Activated CD8-positive, alpha-beta memory T cell treated with anti-CD3 and anti-CD28 coated beads, Interleukin-2, amount 10 ng/mL, durations not matched to agents 7 days and 5 days (primary cell): ENCODE measurements at regions of chr3 and their contacts with region 1.

Region 1: DNA sequence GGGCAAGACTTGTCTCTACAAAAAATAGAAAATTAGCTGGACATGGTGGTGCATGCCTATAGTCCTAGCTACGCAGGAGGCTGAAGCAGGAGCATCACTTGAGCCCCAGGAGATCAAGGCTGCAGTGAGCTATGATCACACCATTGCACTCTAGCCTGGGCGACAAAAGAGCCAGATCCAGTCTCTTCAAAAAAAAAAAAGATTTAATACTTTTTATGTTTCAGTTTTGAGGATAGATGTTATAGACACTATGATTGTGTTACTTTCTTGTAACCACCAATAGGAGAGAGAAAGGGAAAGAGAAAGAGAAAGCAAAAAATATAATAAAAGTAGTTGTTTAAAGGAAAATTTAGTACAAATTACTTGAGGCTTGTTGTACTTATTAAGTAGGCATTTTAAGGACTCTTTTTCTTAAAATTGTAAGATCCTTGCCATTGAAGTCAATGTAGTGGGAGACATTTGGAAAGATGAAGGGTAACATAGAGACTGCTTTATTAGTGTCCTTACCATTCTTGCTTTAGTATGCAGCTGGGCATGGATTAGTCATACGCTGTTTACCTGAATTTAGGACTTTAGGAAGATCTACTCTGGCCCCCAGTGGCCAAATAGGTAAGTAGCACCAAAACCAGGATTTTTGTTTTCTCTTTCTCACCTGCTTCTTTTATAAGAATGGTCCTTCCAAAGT is 35.1 kb upstream of the ZDHHC23 start:
- DNase-seq: peak; percentile 53
- ATAC-seq: peak; percentile 96
- H3K4me3 Mint-ChIP-seq: peak overlapping the region; percentile 54
- H3K27ac Mint-ChIP-seq: peak overlapping the region; percentile 52
- H3K4me1 Mint-ChIP-seq: peaks cover 8% of the 10 kb centered on the region
- H3K27me3 Mint-ChIP-seq: peaks cover 3% of the 10 kb centered on the region

Region 2: DNA sequence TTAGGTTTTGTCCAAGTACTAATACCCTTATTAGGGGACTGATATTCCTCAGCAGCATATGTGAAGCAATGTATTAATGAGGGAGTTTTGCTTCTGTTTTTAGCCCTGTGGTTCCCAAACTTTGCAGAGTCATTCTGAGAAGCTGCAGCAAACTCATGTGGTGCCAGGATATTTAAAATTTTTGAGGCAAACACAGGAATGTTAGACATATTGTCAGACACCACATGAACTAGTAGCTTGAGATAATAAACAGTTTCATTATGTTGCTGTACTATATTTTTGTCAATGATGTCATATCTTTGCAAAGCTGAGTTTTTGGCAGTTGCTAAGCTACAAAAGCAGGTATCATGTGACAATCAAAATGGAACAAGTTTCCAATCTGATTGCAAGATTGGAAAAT is 129.2 kb before region 1 on chr3:
- CTCF ChIA-PET with region 1: no interaction called
- DNase-seq: no peak
- ATAC-seq: no peak
- H3K4me3 Mint-ChIP-seq: no peak overlapping the region
- H3K27ac Mint-ChIP-seq: no peak overlapping the region
- H3K4me1 Mint-ChIP-seq: peaks cover 12% of the 10 kb centered on the region
- H3K27me3 Mint-ChIP-seq: no peaks in the 10 kb centered on the region

Region 3: DNA sequence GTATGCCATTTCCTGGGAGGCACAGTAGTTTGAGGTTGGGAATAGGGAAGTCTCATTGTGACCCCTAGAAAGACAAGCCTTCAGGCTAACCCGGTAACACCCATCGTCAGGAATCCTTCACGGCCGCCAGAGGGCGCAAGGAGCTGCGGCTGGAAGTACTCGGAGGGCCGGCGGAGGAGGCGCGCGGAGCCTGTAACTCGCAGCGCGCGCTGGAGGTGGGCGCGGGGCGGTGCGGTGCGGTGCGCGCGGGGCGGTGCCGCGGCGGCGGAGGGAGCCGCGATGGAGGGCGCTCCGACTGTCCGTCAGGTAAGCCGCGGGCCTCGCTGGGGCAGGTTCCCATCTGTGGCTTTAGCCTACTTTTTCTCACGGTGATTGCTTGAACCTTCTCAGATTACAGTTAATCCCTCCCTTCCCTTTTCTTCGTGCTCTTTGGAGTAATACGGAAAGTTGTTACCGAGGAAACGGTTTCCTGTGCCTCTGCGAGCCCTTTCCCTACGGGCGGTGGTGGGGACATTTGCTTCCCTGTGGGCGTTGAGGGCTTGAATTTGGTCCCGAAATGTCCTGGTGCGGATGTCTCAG is 74.0 kb before region 1 on chr3 and contains the start of gene GRAMD1C:
- CTCF ChIA-PET with region 1: interaction called, 28 read pairs
- DNase-seq: peak; percentile 88
- ATAC-seq: peak; percentile 99
- H3K4me3 Mint-ChIP-seq: peak within 1 kb of the TSS; percentile 69
- H3K27ac Mint-ChIP-seq: no peak within 1 kb of the TSS
- H3K4me1 Mint-ChIP-seq: peaks cover 8% of the 10 kb centered on the region
- H3K27me3 Mint-ChIP-seq: no peaks in the 10 kb centered on the region
- total RNA-seq, gene GRAMD1C: 0.40 to 1.1 TPM

Region 4: GRCh38 chr3:113844622-113845222 is 68.0 kb before region 1 on chr3:
- CTCF ChIA-PET with region 1: interaction called, 28 read pairs
- DNase-seq: no peak
- ATAC-seq: peak; percentile 60
- H3K4me3 Mint-ChIP-seq: no peak overlapping the region
- H3K27ac Mint-ChIP-seq: no peak overlapping the region
- H3K4me1 Mint-ChIP-seq: peaks cover 3% of the 10 kb centered on the region
- H3K27me3 Mint-ChIP-seq: no peaks in the 10 kb centered on the region

Region 5: DNA sequence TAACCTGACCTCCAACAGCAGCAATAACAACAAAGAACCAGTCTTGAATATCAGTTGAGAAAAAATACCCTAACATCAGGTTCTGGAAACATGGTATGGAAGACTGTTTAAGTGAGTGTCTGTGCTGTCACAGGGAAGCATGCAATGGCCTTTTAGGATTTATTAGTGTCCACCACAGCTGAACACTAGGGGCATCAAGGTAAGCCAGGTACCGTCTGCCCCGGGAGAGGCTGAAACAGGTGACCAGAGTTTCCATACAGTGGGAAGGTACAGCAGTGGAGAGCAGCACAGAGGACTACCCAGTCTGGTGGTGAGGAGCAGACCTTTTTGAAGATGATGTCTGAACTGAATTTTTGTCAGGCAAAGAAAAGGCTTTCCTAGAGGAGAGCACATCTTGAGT is 53.5 kb after region 1 on chr3:
- CTCF ChIA-PET with region 1: no interaction called
- DNase-seq: no peak
- ATAC-seq: no peak
- H3K4me3 Mint-ChIP-seq: no peak overlapping the region
- H3K27ac Mint-ChIP-seq: no peak overlapping the region
- H3K4me1 Mint-ChIP-seq: peaks cover 10% of the 10 kb centered on the region
- H3K27me3 Mint-ChIP-seq: no peaks in the 10 kb centered on the region

Region 6: DNA sequence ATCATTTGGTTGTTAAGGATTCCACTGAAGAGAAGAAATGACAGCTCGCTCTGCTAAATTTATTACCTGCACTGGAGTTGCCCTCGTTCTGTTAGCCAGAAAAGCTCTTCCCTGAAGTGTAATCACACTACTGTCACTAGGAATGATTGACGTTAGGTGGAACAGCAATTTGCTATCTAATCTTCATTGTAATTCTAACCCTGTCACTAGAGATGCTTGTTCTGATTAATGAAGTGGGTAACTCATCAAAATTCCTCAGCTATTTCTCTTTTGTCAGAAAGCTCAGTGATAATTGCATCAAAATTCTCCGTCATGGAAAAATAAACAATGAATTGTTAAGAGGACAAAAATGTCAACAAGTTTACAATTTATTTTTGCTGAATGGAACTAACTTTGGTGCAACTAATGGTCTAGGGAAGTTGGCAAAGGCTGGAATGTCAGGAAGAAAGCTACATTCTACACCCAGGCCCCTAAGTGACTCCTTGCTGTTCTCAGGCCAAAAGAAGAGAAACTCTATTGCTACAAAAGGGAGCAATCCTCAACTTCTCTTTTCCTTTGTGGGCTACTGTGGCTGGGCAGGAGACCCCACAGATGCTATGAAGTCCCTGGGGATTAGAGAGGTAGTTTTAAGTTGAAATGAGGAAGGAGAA is 109.6 kb after region 1 on chr3:
- CTCF ChIA-PET with region 1: no interaction called
- DNase-seq: no peak
- ATAC-seq: no peak
- H3K4me3 Mint-ChIP-seq: no peak overlapping the region
- H3K27ac Mint-ChIP-seq: no peak overlapping the region
- H3K4me1 Mint-ChIP-seq: peaks cover 2% of the 10 kb centered on the region
- H3K27me3 Mint-ChIP-seq: no peaks in the 10 kb centered on the region